ENCODE measurements at regions of chr13 and their contacts with region 1.

Region 1: GRCh38 chr13:74287724-74288169 is 153.5 kb upstream of the KLF12 start:
- DNase-seq: peak; percentile 30
- H3K4me3 Mint-ChIP-seq: no peak overlapping the region
- H3K27ac Mint-ChIP-seq: peak overlapping the region; percentile 62
- H3K4me1 Mint-ChIP-seq: peaks cover 24% of the 10 kb centered on the region
- H3K27me3 Mint-ChIP-seq: no peaks in the 10 kb centered on the region
- CTCF ChIP-seq: no peak

Region 2: GRCh38 chr13:73722120-73722519 is 565.6 kb before region 1 on chr13:
- CTCF ChIA-PET with region 1: interaction called, 5 read pairs
- POLR2A ChIA-PET with region 1: no interaction called
- intact Hi-C with region 1: loop called (anchors 1 kb)
- DNase-seq: peak; percentile 64
- H3K4me3 Mint-ChIP-seq: no peak overlapping the region
- H3K27ac Mint-ChIP-seq: no peak overlapping the region
- H3K4me1 Mint-ChIP-seq: peaks cover 14% of the 10 kb centered on the region
- H3K27me3 Mint-ChIP-seq: no peaks in the 10 kb centered on the region
- CTCF ChIP-seq: peak; percentile 37

Region 3: GRCh38 chr13:73835138-73835721 is 452.5 kb before region 1 on chr13:
- CTCF ChIA-PET with region 1: interaction called, 124 read pairs
- POLR2A ChIA-PET with region 1: no interaction called
- intact Hi-C with region 1: loop called (anchors 1 kb)
- DNase-seq: peak; percentile 61
- H3K4me3 Mint-ChIP-seq: no peak overlapping the region
- H3K27ac Mint-ChIP-seq: no peak overlapping the region
- H3K4me1 Mint-ChIP-seq: peaks cover 5% of the 10 kb centered on the region
- H3K27me3 Mint-ChIP-seq: no peaks in the 10 kb centered on the region
- CTCF ChIP-seq: peak; percentile 58

Region 4: DNA sequence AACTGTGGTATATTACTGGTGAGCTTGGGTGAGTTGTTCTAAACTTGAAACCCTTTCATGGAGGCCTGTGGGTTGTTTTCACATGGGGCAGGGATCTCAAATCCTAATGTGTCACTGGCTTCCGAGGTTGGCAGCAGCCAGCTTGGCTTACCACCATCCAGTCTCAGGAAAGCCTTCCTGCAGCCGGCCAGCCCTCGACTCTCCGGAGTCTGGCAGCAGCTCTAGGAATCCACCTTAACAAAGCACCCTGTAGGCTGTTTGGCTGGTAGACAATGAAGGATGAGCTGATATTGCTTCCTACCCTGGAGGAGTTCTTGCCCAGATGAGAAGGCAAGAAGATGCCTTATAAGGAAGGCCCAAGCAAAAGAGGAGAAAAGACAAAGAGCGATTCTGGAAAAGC is 341.9 kb before region 1 on chr13:
- CTCF ChIA-PET with region 1: interaction called, 9 read pairs
- POLR2A ChIA-PET with region 1: no interaction called
- intact Hi-C with region 1: loop called (anchors 1 kb)
- DNase-seq: no peak
- H3K4me3 Mint-ChIP-seq: no peak overlapping the region
- H3K27ac Mint-ChIP-seq: no peak overlapping the region
- H3K4me1 Mint-ChIP-seq: no peaks in the 10 kb centered on the region
- H3K27me3 Mint-ChIP-seq: no peaks in the 10 kb centered on the region
- CTCF ChIP-seq: no peak

Region 5: DNA sequence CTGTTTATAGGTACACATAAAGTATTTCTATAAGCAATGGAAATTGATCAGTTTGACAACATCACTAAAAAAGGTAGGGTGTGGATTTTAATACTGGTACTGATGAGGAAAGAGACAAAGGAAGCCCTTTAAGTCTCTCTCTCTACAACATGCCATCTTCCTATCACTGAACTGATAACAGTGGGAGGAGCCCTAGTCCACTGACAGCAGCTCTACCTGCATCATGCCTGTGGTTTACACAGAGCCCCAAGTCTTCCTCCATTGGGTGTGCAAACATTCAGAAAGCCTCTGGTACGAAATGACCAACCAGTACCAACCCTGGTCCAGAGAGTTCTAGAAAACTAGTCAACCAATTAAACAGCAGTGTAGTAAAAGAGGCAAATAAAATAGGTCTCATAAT is 207.0 kb before region 1 on chr13:
- CTCF ChIA-PET with region 1: no interaction called
- POLR2A ChIA-PET with region 1: no interaction called
- intact Hi-C with region 1: no loop called
- DNase-seq: no peak
- H3K4me3 Mint-ChIP-seq: no peak overlapping the region
- H3K27ac Mint-ChIP-seq: no peak overlapping the region
- H3K4me1 Mint-ChIP-seq: peaks cover 8% of the 10 kb centered on the region
- H3K27me3 Mint-ChIP-seq: no peaks in the 10 kb centered on the region
- CTCF ChIP-seq: no peak

Region 6: GRCh38 chr13:74270018-74270417 is 17.7 kb before region 1 on chr13:
- CTCF ChIA-PET with region 1: interaction called, 12 read pairs
- POLR2A ChIA-PET with region 1: no interaction called
- intact Hi-C with region 1: no loop called
- DNase-seq: peak; percentile 17
- H3K4me3 Mint-ChIP-seq: no peak overlapping the region
- H3K27ac Mint-ChIP-seq: no peak overlapping the region
- H3K4me1 Mint-ChIP-seq: no peaks in the 10 kb centered on the region
- H3K27me3 Mint-ChIP-seq: no peaks in the 10 kb centered on the region
- CTCF ChIP-seq: no peak

Region 7: GRCh38 chr13:75219479-75220237 is 931.9 kb after region 1 on chr13:
- CTCF ChIA-PET with region 1: interaction called, 61 read pairs
- POLR2A ChIA-PET with region 1: interaction called, 4 read pairs
- intact Hi-C with region 1: loop called (anchors 1 kb)
- DNase-seq: peak; percentile 74
- H3K4me3 Mint-ChIP-seq: peak overlapping the region; percentile 54
- H3K27ac Mint-ChIP-seq: no peak overlapping the region
- H3K4me1 Mint-ChIP-seq: peaks cover 29% of the 10 kb centered on the region
- H3K27me3 Mint-ChIP-seq: no peaks in the 10 kb centered on the region
- CTCF ChIP-seq: peak; percentile 97